HepG2 (cell line): ENCODE measurements at regions of chr13 and their contacts with region 1.

Region 1: GRCh38 chr13:20495082-20496023 is 30.3 kb downstream of the CRYL1 start:
- DNase-seq: peak; percentile 66
- ATAC-seq: peak; percentile 70
- H3K4me3 ChIP-seq: peak overlapping the region in 2 of 3 experiments; percentile 32 to 34; a peak in 3 of 6 replicates
- H3K27ac ChIP-seq: peak overlapping the region; percentile 73
- H3K4me1 ChIP-seq: peaks cover 45% of the 10 kb centered on the region
- H3K27me3 ChIP-seq: no peaks in the 10 kb centered on the region
- CTCF ChIP-seq: peak; percentile 84
- EP300 ChIP-seq: peak in 1 of 2 experiments; percentile 15; a peak in 1 of 4 replicates
- POLR2A ChIP-seq: 0 out of 4 replicates have a peak, but pooled peaks of 1 of the 2 experiments have one; percentile 19
- RAD21 ChIP-seq: peak; percentile 77

Region 2: DNA sequence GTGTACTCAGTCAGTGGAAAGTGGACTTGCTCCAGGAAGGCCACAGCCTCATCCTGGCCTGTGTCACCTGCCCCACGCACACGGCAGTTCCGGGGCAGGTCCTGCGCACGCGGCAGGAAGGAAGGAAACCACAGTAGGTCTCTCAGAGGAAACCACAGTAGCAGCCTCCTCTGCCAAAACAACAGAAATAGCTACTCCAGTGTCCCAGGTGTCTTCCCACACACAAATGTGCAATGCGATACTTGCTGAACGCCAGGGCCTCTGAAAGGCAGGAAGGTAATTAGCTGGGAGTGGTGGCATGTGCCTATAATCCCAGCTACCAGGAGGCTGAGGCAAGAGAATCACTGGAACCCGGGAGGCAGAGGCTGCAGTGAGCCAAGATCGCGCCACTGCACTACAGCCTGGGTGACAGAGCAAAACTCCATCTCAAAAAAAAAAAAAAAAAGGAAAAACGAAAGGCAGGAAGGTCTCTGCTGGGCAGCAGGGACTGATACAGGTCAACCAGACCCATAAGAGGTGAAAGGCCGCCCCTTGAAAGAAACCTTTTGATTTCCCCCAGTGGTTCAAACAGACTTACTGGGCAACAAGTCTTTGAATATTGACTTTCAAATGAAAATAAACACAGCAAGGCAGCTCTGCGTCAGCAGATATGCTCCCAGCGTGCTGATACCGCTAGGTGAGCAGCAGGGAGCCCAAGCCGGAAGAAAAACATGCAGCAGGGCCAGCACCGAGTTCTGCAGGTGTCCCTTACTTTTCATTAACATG is 19.2 kb before region 1 on chr13:
- CTCF ChIA-PET with region 1: no interaction called
- POLR2A ChIA-PET with region 1: no interaction called
- in situ Hi-C with region 1: no loop called
- intact Hi-C with region 1: no loop called
- DNase-seq: no peak
- ATAC-seq: peak; percentile 64
- H3K4me3 ChIP-seq: no peak overlapping the region
- H3K27ac ChIP-seq: peak overlapping the region; percentile 1
- H3K4me1 ChIP-seq: peaks cover 10% of the 10 kb centered on the region
- H3K27me3 ChIP-seq: no peaks in the 10 kb centered on the region
- CTCF ChIP-seq: no peak
- EP300 ChIP-seq: no peak
- POLR2A ChIP-seq: no peak
- RAD21 ChIP-seq: no peak

Region 3: DNA sequence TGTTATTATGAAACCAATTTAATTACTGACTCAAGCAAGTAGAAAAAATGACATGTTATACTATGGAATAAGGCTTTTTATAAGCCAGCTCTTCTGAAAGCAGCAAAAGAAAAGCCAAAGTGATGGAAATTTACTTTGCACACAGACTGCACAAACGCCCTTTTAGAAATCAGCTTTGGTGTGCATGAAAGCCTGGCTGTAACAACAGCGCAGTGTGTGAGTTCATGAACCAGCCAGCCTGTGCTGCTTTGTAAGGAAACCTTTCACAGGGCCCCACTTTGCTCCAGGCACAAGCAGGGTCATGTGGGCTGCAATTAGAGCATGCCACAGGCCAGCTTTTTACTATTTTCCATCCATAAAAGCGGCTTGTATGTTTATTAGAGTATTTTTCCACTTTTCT is 58.0 kb after region 1 on chr13:
- CTCF ChIA-PET with region 1: interaction called, 6 read pairs
- POLR2A ChIA-PET with region 1: interaction called, 3 read pairs
- in situ Hi-C with region 1: no loop called
- intact Hi-C with region 1: loop called (anchors 5 kb)
- DNase-seq: peak; percentile 83
- ATAC-seq: peak; percentile 89
- H3K4me3 ChIP-seq: no peak overlapping the region
- H3K27ac ChIP-seq: peak overlapping the region; percentile 77
- H3K4me1 ChIP-seq: peaks cover 91% of the 10 kb centered on the region
- H3K27me3 ChIP-seq: no peaks in the 10 kb centered on the region
- CTCF ChIP-seq: no peak
- EP300 ChIP-seq: peak in 1 of 2 experiments; percentile 72; a peak in 2 of 4 replicates
- POLR2A ChIP-seq: peak; percentile 25 to 41; a peak in 1 of 4 replicates
- RAD21 ChIP-seq: no peak; the same call in 1 of the 2 replicates

Region 4: DNA sequence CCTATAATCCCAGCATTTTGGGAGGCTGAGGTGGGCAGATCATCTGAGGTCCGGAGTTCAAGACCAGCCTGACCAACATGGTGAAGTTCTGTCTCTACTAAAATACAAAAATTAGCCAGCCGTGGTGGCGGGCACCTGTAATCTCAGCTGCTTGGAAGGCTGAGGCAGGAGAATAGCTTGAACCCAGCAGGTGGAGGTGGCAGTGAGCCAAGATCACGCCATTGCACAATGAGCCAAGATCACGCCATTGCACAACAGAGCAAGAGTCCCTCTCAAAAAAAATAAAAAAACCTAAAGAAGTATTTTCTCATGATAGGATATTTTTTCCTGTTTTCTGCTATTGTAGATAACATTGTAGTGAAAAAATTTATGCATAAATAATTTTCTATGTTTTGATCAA is 84.9 kb after region 1 on chr13:
- CTCF ChIA-PET with region 1: interaction called, 14 read pairs
- POLR2A ChIA-PET with region 1: no interaction called
- in situ Hi-C with region 1: no loop called
- intact Hi-C with region 1: loop called (anchors 5 kb)
- DNase-seq: no peak
- ATAC-seq: no peak
- H3K4me3 ChIP-seq: no peak overlapping the region
- H3K27ac ChIP-seq: no peak overlapping the region
- H3K4me1 ChIP-seq: no peaks in the 10 kb centered on the region
- H3K27me3 ChIP-seq: no peaks in the 10 kb centered on the region
- CTCF ChIP-seq: no peak
- EP300 ChIP-seq: no peak
- POLR2A ChIP-seq: no peak
- RAD21 ChIP-seq: no peak

Region 5: DNA sequence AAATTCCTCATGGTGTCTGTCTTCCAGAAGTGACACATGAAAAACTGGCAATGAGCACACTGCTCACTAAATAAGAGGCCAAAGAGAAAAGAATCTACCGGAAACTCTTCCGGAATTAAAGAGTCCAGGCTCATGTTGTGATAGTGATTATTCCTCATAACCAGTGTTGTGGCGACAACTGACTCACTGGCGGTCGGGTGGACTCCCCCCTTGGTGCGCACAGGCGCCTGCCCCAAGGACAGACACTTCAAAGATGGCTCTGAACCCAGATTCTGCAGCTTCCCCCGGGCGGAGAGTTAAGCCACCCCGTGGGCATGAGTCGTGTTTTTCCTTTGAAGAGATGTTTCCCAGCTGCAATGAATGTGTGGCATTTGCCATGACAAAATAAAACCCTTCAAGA is 218.4 kb after region 1 on chr13:
- CTCF ChIA-PET with region 1: interaction called, 21 read pairs
- POLR2A ChIA-PET with region 1: no interaction called
- in situ Hi-C with region 1: loop called (anchors 5 kb)
- intact Hi-C with region 1: loop called (anchors 1 kb)
- DNase-seq: no peak
- ATAC-seq: peak; percentile 5; the same call in 1 of the 3 replicates
- H3K4me3 ChIP-seq: peak overlapping the region in 2 of 3 experiments; percentile 22 to 61; a peak in 3 of 6 replicates
- H3K27ac ChIP-seq: no peak overlapping the region
- H3K4me1 ChIP-seq: peaks cover 57% of the 10 kb centered on the region
- H3K27me3 ChIP-seq: no peaks in the 10 kb centered on the region; a peak in 1 of 5 replicates
- CTCF ChIP-seq: no peak
- EP300 ChIP-seq: no peak
- POLR2A ChIP-seq: no peak
- RAD21 ChIP-seq: no peak

Region 6: GRCh38 chr13:20828539-20829364 is 333.4 kb after region 1 on chr13:
- CTCF ChIA-PET with region 1: interaction called, 19 read pairs
- POLR2A ChIA-PET with region 1: no interaction called
- in situ Hi-C with region 1: loop called (anchors 5 kb)
- intact Hi-C with region 1: loop called (anchors 1 kb)
- DNase-seq: peak; percentile 38
- ATAC-seq: peak; percentile 50
- H3K4me3 ChIP-seq: 0 out of 6 replicates have a peak overlapping the region, but pooled peaks of 1 of the 3 experiments have one; percentile 27
- H3K27ac ChIP-seq: no peak overlapping the region
- H3K4me1 ChIP-seq: peaks cover 8% of the 10 kb centered on the region; the same call in 1 of the 2 replicates
- H3K27me3 ChIP-seq: no peaks in the 10 kb centered on the region; a peak in 1 of 5 replicates
- CTCF ChIP-seq: peak; percentile 68
- EP300 ChIP-seq: no peak
- POLR2A ChIP-seq: no peak
- RAD21 ChIP-seq: 0 out of 2 replicates have a peak, but pooled peaks have one; percentile 25